PC-3 (cell line): ENCODE measurements at regions of chr10 and their contacts with region 1.

Region 1: DNA sequence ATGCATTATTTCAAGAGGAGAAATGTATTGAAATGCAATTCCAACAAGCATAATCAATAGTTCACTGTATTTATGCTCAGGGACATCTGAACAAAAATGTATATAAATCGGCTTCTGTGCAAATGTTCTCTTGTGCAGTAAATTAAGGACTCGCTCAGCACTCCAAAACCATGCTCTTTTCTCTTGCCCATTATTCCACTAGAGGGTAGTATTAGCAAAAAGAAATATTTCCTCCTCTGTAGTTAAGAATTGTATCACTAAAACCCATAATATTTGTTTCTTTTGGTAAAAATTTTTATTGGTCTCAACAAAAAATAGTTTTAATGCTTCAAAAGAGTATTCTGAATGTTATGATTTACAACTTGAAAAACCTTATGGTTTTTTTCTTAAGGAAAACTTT is 803.1 kb downstream of the PCDH15 start:
- DNase-seq: peak; percentile 60
- ATAC-seq: peak; percentile 93
- H3K4me3 ChIP-seq: no peak overlapping the region
- H3K27ac ChIP-seq: no peak overlapping the region
- H3K4me1 ChIP-seq: no peaks in the 10 kb centered on the region
- H3K27me3 ChIP-seq: no peaks in the 10 kb centered on the region
- CTCF ChIP-seq: peak; percentile 87

Region 2: GRCh38 chr10:53209944-53210611 is 787.9 kb before region 1 on chr10:
- CTCF ChIA-PET with region 1: interaction called, 3 read pairs
- POLR2A ChIA-PET with region 1: no interaction called
- intact Hi-C with region 1: loop called (anchors 2 kb)
- DNase-seq: peak; percentile 97
- ATAC-seq: peak; percentile 96
- H3K4me3 ChIP-seq: no peak overlapping the region
- H3K27ac ChIP-seq: no peak overlapping the region
- H3K4me1 ChIP-seq: no peaks in the 10 kb centered on the region
- H3K27me3 ChIP-seq: no peaks in the 10 kb centered on the region
- CTCF ChIP-seq: peak; percentile 99

Region 3: DNA sequence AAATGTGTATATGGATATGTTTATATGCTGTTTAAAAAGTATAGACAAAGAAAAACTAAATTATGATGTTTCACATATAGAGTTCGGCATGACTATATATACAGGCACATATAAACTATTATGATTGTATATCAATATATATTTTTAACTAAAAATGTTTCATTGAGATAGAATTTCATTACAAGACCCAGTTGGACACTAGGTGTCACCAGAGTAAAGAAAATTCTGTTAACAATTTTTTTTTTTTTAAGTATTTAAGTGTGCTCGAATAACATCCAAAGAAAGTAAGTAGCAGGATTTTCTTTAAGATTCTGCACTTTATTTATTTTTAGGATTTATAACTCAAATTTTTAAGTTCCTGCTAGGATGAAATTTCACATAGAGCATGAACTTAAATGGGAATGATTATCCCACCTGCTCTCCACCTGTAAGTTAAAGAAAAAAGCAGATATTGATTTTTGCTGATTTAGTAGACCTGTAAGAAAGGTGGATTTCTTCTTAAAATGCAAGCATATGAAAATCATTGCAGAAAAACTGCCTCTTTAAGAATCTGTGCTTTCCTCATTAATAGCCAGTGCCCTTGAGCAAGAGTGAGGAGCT is 158.4 kb before region 1 on chr10:
- CTCF ChIA-PET with region 1: no interaction called
- POLR2A ChIA-PET with region 1: no interaction called
- intact Hi-C with region 1: loop called (anchors 2 kb)
- DNase-seq: peak; percentile 78
- ATAC-seq: no peak
- H3K4me3 ChIP-seq: no peak overlapping the region
- H3K27ac ChIP-seq: no peak overlapping the region
- H3K4me1 ChIP-seq: peaks cover 9% of the 10 kb centered on the region; the same call in 1 of the 2 replicates
- H3K27me3 ChIP-seq: no peaks in the 10 kb centered on the region
- CTCF ChIP-seq: peak; percentile 71

Region 4: GRCh38 chr10:54133203-54133602 is 135.2 kb after region 1 on chr10:
- CTCF ChIA-PET with region 1: no interaction called
- POLR2A ChIA-PET with region 1: no interaction called
- intact Hi-C with region 1: loop called (anchors 1 kb)
- DNase-seq: peak; percentile 54
- ATAC-seq: peak; percentile 63
- H3K4me3 ChIP-seq: no peak overlapping the region
- H3K27ac ChIP-seq: no peak overlapping the region
- H3K4me1 ChIP-seq: no peaks in the 10 kb centered on the region
- H3K27me3 ChIP-seq: no peaks in the 10 kb centered on the region
- CTCF ChIP-seq: peak; percentile 91

Region 5: DNA sequence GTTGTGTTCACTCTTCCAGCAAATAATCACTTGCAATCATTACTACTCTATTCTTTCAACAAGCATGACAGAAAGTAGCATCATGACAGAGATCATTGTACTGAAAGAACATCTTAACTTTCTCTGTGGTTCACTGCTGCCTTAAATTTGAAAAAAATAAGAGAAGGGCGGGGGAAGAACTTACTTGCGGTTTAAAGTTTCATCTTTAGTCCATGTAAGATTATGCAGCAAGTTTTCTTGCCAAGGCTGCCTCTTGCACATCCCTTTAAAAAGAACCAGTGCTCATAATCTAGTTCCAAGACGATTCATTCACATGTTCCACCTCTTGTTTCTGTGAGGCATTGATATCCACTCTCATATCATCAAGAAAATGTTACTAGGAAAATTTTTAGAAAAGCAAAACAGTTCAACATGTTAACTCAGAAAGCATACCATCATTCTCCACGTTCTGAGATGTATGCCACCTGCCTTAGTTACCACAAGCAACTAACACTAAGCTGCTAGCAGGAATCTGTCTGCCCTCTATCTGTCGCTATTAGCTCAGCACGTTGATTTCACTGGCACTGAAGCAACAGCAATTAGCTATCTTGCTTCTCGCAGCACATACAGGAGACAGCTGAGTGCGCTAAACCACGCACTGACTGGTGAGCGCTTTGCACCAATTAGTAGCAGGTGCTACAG is 802.9 kb after region 1 on chr10 and contains the start of gene PCDH15:
- CTCF ChIA-PET with region 1: no interaction called
- POLR2A ChIA-PET with region 1: no interaction called
- intact Hi-C with region 1: loop called (anchors 5 kb)
- DNase-seq: peak; percentile 80
- ATAC-seq: peak; percentile 80
- H3K4me3 ChIP-seq: peak within 1 kb of the TSS; percentile 34; the same call in 1 of the 2 replicates
- H3K27ac ChIP-seq: no peak within 1 kb of the TSS
- H3K4me1 ChIP-seq: peaks cover 27% of the 10 kb centered on the region
- H3K27me3 ChIP-seq: no peaks in the 10 kb centered on the region
- CTCF ChIP-seq: peak; percentile 88
- total RNA-seq, gene PCDH15: not detected in 2 replicates

Region 6: GRCh38 chr10:55263327-55263726 is 1265.4 kb after region 1 on chr10:
- CTCF ChIA-PET with region 1: no interaction called
- POLR2A ChIA-PET with region 1: no interaction called
- intact Hi-C with region 1: loop called (anchors 2 kb)
- DNase-seq: no peak
- ATAC-seq: peak; percentile 20
- H3K4me3 ChIP-seq: no peak overlapping the region
- H3K27ac ChIP-seq: no peak overlapping the region
- H3K4me1 ChIP-seq: no peaks in the 10 kb centered on the region
- H3K27me3 ChIP-seq: no peaks in the 10 kb centered on the region
- CTCF ChIP-seq: no peak